Activated CD4-positive, alpha-beta memory T cell treated with anti-CD3 and anti-CD28 coated beads for 36 hours (primary cell): ENCODE measurements at regions of chr6 and their contacts with region 1.

Region 1: GRCh38 chr6:25942561-25943147 is 12.2 kb upstream of the SLC17A2 start:
- DNase-seq: no peak
- H3K4me3 Mint-ChIP-seq: no peak overlapping the region
- H3K27ac Mint-ChIP-seq: no peak overlapping the region
- H3K4me1 Mint-ChIP-seq: peaks cover 25% of the 10 kb centered on the region
- H3K27me3 Mint-ChIP-seq: peaks cover 4% of the 10 kb centered on the region

Region 2: DNA sequence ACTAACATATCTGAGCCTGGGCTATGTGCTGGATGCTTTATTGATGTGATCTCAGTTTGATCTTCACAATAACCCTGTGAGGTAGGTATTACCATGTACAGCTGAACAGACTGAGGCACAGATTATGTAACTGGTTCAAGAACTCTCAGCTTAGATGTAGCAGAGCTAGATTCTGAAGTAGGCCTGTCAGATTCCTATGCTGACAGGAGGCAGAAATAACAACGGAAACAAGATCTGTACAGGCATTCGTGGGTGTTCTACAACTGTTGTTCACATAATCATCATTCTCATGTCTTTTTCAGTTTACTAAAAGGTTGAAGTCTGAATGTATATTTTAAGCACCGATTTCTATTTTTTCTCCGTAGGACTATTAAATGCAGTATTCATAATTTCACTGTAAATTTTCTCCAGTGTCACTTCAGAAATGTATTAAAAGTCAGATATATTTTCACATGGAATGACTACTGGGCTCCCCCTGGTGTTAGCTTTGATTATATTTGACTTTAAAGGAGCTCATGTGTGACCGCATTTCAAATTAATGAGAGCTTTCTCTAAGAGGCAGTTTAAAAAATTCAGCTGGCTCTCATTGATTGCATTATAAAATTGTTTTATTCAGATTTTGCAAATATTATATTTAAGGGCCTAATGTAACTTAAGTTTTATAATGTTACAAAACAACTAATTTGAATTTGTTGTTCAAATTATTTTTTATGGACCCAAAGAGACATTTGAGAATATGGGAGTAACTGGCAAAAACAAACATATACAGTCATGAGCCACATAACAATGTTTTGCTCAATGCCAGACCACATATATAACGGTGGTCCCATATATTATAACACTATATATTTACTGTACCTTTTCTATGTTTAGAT is 224.6 kb before region 1 on chr6:
- CTCF ChIA-PET with region 1: interaction called, 34 read pairs
- POLR2A ChIA-PET with region 1: no interaction called
- intact Hi-C with region 1: loop called (anchors 1 kb)
- DNase-seq: no peak
- H3K4me3 Mint-ChIP-seq: no peak overlapping the region
- H3K27ac Mint-ChIP-seq: no peak overlapping the region
- H3K4me1 Mint-ChIP-seq: no peaks in the 10 kb centered on the region
- H3K27me3 Mint-ChIP-seq: peaks cover 14% of the 10 kb centered on the region

Region 3: DNA sequence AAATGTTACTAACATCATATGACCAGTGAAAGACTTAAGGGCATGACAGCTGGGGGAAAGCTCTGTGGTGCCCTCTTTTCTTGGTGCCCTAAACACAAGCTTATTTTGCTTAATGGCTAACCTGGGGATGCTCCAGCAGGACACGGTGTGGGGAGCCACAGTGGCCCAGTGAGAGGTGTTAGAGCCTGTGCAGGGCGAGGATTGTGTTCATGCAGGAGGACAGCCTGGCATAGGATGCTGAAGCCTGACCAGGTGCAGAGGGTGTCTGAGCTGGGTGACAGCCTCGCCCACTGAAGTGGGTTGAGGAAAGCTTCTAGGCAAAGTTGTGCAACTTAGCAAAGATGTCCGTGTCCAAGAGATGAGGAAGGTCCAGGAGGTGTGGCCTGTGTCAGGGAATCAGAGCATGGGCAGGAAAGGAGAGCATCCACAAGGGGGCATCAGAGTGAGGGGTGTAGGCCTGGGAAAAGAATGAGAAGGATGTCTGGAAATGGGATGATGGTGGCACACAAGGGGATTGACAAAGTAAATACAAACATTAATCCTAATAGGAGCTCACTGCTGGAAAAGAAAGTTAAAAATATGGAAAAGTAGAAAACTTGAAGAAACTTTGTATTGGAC is 154.2 kb before region 1 on chr6:
- CTCF ChIA-PET with region 1: interaction called, 9 read pairs
- POLR2A ChIA-PET with region 1: no interaction called
- intact Hi-C with region 1: loop called (anchors 2 kb)
- DNase-seq: peak; percentile 63
- H3K4me3 Mint-ChIP-seq: no peak overlapping the region
- H3K27ac Mint-ChIP-seq: no peak overlapping the region
- H3K4me1 Mint-ChIP-seq: peaks cover 11% of the 10 kb centered on the region
- H3K27me3 Mint-ChIP-seq: no peaks in the 10 kb centered on the region

Region 4: GRCh38 chr6:25913741-25914140 is 28.9 kb before region 1 on chr6:
- CTCF ChIA-PET with region 1: interaction called, 3 read pairs
- POLR2A ChIA-PET with region 1: no interaction called
- intact Hi-C with region 1: loop called (anchors 5 kb)
- DNase-seq: peak; percentile 35
- H3K4me3 Mint-ChIP-seq: no peak overlapping the region
- H3K27ac Mint-ChIP-seq: peak overlapping the region; percentile 65
- H3K4me1 Mint-ChIP-seq: peaks cover 52% of the 10 kb centered on the region
- H3K27me3 Mint-ChIP-seq: no peaks in the 10 kb centered on the region

Region 5: DNA sequence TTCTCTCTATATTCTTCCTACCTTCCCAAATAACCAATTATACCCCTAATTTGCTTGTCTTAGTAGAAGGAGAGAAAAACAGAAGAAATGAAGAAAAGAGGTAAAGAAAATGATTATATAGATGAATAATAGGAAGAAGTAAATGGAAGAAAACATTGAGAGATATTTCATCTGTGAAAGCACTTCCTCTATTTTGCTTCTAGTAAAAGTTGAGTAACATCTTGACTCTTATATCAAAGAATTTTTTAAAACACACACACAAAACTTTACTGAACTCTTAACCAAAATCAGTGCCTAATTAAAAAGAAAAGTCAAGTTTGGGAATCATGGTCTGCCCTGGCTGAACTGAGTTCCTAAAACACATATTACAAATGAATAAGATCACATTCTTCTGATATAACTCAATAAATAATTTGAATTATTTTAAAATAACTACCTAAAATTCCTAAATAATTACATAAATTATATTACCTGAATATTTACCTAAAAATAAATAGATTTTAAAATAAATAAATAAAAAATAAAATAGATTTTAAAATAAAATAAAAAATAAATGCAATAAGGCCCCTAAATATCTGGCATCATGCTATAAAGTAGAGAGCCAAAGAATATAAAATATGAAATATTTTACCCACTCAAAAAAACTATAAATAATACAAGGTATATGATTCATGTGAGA is 21.0 kb before region 1 on chr6:
- CTCF ChIA-PET with region 1: interaction called, 3 read pairs
- POLR2A ChIA-PET with region 1: no interaction called
- intact Hi-C with region 1: loop called (anchors 2 kb)
- DNase-seq: no peak
- H3K4me3 Mint-ChIP-seq: no peak overlapping the region
- H3K27ac Mint-ChIP-seq: no peak overlapping the region
- H3K4me1 Mint-ChIP-seq: peaks cover 19% of the 10 kb centered on the region
- H3K27me3 Mint-ChIP-seq: no peaks in the 10 kb centered on the region

Region 6: DNA sequence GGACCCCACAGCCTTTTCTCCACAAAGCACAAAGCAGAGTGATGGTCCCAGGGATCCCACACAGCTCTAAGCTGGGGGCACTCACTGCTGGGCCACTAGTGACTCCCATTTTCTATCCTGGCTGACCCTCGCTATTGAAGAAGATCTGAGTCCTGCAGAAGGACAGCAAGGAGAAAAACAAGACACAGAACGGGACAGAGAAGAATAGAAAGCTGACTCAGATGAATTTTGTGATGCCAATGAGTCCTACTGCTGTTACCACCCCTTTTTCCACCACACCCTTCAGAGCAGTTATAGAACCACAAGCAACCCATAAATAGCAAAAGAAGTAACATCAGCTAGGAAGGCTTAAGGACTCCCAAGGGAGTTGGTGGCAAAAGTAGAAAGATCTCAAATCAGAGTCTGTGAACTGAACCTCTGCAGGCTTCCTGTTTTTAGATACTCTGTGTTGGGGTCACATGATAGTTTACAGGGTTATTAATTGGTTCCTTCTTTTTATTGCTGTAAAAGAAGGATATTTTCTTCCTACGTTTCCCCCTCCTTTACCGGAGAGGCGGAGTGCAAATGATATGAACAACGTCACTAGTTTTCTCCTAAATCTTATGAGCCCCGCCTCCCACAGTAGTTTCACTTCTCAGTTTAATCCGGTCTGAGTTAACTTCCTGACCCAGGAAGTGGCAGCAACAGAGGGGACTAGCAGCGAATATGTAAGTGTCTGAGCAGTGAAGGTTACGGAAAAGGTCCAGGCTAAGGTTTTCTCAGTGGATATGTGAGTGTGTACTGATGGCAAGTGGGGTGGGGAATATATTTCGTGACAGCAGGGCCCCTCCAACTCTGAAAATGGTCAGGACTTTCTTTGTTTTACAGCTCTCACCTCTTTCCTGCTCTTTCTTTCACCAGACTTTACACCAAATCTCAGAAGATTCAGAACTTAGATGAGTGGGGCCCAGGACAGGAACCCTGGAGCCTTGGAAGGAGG is 19.8 kb after region 1 on chr6 and contains the start of gene TRIM38:
- CTCF ChIA-PET with region 1: interaction called, 5 read pairs
- POLR2A ChIA-PET with region 1: interaction called, 3 read pairs
- intact Hi-C with region 1: loop called (anchors 1 kb)
- DNase-seq: peak; percentile 83
- H3K4me3 Mint-ChIP-seq: peak within 1 kb of the TSS; percentile 98
- H3K27ac Mint-ChIP-seq: peak within 1 kb of the TSS; percentile 100
- H3K4me1 Mint-ChIP-seq: peaks cover 77% of the 10 kb centered on the region
- H3K27me3 Mint-ChIP-seq: no peaks in the 10 kb centered on the region
- total RNA-seq, gene TRIM38: 29.5 to 30.8 TPM

Region 7: DNA sequence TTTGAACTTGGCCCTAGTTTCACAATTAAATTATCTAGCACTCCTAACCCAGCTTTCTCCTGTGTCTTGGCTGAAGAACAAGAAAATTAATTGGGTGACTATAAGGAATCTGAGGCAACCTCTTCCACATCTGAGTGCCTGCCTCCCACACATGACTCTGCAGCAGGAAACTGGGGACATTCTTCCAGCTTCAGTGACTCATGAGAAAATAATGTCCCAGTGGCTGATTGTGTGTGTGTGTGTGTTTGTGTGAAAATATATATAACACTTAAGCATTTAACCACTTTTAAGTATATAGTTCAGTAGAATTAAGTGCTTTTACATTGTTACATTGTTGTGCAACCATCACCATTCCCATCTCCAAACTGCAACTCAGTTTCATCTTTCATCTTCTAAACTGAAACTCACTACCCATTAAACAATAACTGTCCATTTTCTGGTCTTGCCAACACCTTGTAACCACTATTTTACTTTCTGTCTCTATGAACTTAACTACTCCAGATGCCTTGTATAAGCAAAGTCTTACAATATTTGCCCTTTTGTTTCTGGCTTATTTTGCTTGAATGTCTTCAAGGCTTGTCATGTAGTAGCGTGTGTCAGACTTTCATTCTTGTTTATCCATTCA is 28.6 kb after region 1 on chr6:
- CTCF ChIA-PET with region 1: no interaction called
- POLR2A ChIA-PET with region 1: no interaction called
- intact Hi-C with region 1: loop called (anchors 1 kb)
- DNase-seq: peak; percentile 30
- H3K4me3 Mint-ChIP-seq: peak overlapping the region; percentile 20
- H3K27ac Mint-ChIP-seq: peak overlapping the region; percentile 30
- H3K4me1 Mint-ChIP-seq: peaks cover 80% of the 10 kb centered on the region
- H3K27me3 Mint-ChIP-seq: no peaks in the 10 kb centered on the region

Region 8: DNA sequence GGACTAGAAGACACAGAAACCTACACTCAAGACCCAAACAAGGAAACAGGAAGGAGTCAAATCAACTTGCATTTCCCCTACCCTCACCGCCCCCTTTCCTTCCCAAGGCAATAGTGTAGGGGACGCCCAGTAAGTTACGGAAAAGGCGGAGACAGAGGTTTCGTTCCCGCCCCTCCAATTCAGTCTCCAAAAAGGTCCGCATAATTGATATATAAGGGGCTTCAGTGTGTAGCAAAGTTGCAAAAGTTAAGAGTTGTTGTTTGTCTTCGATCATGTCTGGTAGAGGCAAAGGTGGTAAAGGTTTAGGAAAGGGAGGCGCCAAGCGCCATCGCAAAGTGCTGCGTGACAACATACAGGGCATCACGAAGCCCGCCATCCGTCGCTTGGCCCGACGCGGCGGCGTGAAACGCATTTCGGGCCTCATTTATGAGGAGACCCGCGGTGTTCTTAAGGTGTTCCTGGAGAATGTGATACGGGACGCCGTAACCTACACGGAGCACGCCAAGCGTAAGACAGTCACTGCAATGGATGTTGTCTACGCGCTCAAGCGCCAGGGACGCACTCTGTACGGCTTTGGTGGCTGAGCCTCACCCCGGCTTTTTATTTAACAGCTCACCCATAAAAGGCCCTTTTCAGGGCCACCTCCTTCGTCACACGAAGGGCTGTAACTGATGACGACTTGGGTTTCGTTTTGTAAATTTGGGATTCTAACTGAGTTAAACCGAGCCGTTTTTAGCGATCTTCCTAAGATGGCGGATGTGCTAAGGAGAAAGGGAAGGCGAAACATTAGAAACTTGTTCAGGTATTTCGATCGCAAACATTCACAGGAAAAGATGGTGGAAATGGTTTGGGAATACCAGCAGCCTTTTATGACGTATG is 297.7 kb after region 1 on chr6:
- CTCF ChIA-PET with region 1: no interaction called
- POLR2A ChIA-PET with region 1: no interaction called
- intact Hi-C with region 1: no loop called
- DNase-seq: peak; percentile 85
- H3K4me3 Mint-ChIP-seq: peak overlapping the region; percentile 70
- H3K27ac Mint-ChIP-seq: peak overlapping the region; percentile 91
- H3K4me1 Mint-ChIP-seq: peaks cover 20% of the 10 kb centered on the region
- H3K27me3 Mint-ChIP-seq: peaks cover 4% of the 10 kb centered on the region